ENCODE measurements at regions of chr1 and their contacts with region 1.

Region 1: GRCh38 chr1:56424744-56425508 is 154.4 kb downstream of the PLPP3 start:
- DNase-seq: peak; percentile 86 to 94 (median 90)
- H3K4me3 ChIP-seq: peak overlapping the region in 1 of 3 experiments; percentile 57
- H3K4me3 Mint-ChIP-seq: peak overlapping the region; percentile 37 to 69
- H3K27ac ChIP-seq: peak overlapping the region; percentile 67 to 95
- H3K27ac Mint-ChIP-seq: peak overlapping the region; percentile 87 to 98 (median 96)
- H3K4me1 ChIP-seq: peaks cover 35 to 40% of the 10 kb centered on the region in 2 donors
- H3K4me1 Mint-ChIP-seq: peaks cover 38% of the 10 kb centered on the region
- H3K27me3 ChIP-seq: no peaks in the 10 kb centered on the region
- H3K27me3 Mint-ChIP-seq: no peaks in the 10 kb centered on the region
- CTCF ChIP-seq: no peak

Region 2: GRCh38 chr1:56472860-56473259 is 47.9 kb after region 1 on chr1:
- intact Hi-C with region 1: loop called in 1 of 2 experiments (anchors 5 kb)
- DNase-seq: peak; percentile 73 to 86 (median 84)
- H3K4me3 ChIP-seq: peak overlapping the region in 1 of 3 experiments; percentile 35
- H3K4me3 Mint-ChIP-seq: peak overlapping the region in 1 of 2 donors; percentile 71
- H3K27ac ChIP-seq: no peak overlapping the region
- H3K27ac Mint-ChIP-seq: peak overlapping the region; percentile 25 to 86 (median 69)
- H3K4me1 ChIP-seq: peaks cover 46 to 51% of the 10 kb centered on the region in 2 donors
- H3K4me1 Mint-ChIP-seq: peaks cover 56% of the 10 kb centered on the region
- H3K27me3 ChIP-seq: peaks cover 9 to 18% of the 10 kb centered on the region in 2 donors
- H3K27me3 Mint-ChIP-seq: peaks cover 26 to 40% (median 33%) of the 10 kb centered on the region in 3 donors
- CTCF ChIP-seq: no peak

Region 3: DNA sequence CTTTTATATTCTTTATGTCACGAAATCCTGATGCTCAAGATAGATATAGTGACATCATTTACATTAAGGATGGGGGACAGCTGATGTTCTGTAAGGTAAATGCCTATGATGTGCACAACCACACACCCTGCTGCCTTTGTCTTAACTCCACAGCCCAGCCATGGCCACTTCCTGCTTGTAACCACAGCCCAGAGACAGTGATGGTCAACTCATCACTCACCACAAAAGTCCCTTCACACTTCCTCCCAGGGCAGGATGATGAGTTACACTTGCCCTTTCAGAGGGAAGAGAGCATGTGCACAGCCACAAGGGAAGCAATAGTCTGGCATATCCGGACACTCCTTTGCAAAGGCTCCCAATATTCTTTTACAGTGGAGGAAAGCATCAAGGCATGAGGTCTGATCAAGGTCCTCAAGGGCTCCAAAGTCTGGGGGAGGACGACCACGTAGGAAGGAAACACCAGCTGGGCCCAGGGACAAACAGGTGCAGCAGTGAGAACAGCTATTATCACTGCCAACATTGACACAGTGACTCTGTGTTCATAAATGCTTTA is 100.6 kb after region 1 on chr1:
- intact Hi-C with region 1: loop called in 1 of 2 experiments (anchors 5 kb)
- DNase-seq: peak; percentile 91 to 97 (median 94)
- H3K4me3 ChIP-seq: no peak overlapping the region
- H3K4me3 Mint-ChIP-seq: peak overlapping the region in 1 of 2 donors; percentile 48
- H3K27ac ChIP-seq: peak overlapping the region in 1 of 2 donors; percentile 26
- H3K27ac Mint-ChIP-seq: peak overlapping the region; percentile 72 to 93 (median 80)
- H3K4me1 ChIP-seq: peaks cover 21 to 32% of the 10 kb centered on the region in 2 donors
- H3K4me1 Mint-ChIP-seq: peaks cover 41% of the 10 kb centered on the region
- H3K27me3 ChIP-seq: peaks cover 76 to 84% of the 10 kb centered on the region in 2 donors
- H3K27me3 Mint-ChIP-seq: peaks cover 32 to 59% (median 34%) of the 10 kb centered on the region in 3 donors
- CTCF ChIP-seq: no peak